ENCODE measurements at regions of chr4 and their contacts with region 1.

Region 1: DNA sequence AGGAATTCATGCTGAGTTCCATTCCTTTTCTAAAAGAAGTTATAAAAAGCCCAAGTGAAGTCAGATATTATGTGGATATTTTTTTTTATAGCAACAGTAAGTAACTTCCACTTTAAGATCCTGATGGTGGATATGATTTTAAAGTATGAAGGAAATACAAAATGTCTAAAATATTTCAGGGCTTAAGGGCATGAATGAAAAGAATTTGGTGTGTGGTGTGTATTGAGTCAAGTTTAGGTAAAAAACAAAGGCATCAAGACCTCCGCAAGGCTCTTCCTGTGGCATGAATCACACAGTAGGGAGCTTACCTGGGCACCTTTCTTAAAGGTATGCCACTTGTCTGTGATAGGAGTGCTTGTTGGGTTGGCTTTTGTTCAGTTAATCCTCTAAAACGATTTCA is 262.5 kb upstream of the AADAT start:
- DNase-seq: no peak

Region 2: GRCh38 chr4:170079981-170080380 is 272.2 kb before region 1 on chr4:
- intact Hi-C with region 1: loop called in 1 of 2 experiments (anchors 5 kb)
- DNase-seq: no peak